Activated CD4-positive, alpha-beta memory T cell treated with anti-CD3 and anti-CD28 coated beads for 36 hours (primary cell): ENCODE measurements at regions of chr1 and their contacts with region 1.

Region 1: DNA sequence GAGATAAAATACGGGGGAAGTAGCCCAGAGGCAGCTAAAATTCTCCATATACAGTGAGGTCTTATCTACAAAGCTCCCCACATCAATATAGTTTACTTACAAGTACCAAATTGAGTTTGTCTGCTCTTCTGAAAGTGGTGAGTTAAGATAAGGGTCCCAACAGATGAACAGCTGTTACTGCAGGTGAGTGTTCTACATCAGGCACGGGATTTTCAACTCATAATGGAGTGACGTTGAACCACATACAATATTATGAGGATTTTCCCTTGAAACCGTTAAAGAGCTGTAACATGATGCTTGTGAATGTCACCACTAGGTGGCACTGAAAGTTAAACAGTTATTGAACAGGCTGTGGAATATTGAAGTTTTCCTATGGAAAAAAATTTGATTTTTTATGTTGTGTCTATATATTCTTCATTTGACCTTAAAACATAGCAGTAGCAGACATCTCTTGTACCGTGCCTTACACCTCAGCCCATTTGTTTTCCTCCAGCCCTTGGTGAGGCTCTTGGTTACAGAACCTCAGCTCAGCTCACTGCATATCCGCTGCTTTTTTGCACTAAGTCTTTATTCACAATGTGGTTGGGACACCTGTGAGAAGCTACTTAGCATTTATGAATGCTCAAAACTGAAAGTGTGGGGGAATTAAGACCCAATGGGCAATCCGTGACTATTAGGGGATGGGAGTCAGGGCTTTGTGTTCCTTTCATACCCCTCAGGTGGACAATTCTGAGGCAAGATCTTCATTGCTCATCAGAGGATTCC is 23.2 kb downstream of the CD1D start:
- DNase-seq: no peak
- H3K4me3 Mint-ChIP-seq: no peak overlapping the region
- H3K27ac Mint-ChIP-seq: no peak overlapping the region
- H3K4me1 Mint-ChIP-seq: peaks cover 7% of the 10 kb centered on the region
- H3K27me3 Mint-ChIP-seq: peaks cover 12% of the 10 kb centered on the region

Region 2: GRCh38 chr1:158329733-158330132 is 125.9 kb after region 1 on chr1:
- CTCF ChIA-PET with region 1: interaction called, 28 read pairs
- POLR2A ChIA-PET with region 1: no interaction called
- intact Hi-C with region 1: loop called (anchors 5 kb)
- DNase-seq: peak; percentile 20
- H3K4me3 Mint-ChIP-seq: no peak overlapping the region
- H3K27ac Mint-ChIP-seq: no peak overlapping the region
- H3K4me1 Mint-ChIP-seq: peaks cover 4% of the 10 kb centered on the region
- H3K27me3 Mint-ChIP-seq: peaks cover 6% of the 10 kb centered on the region

Region 3: GRCh38 chr1:158496374-158496773 is 292.5 kb after region 1 on chr1:
- CTCF ChIA-PET with region 1: interaction called, 6 read pairs
- POLR2A ChIA-PET with region 1: no interaction called
- intact Hi-C with region 1: loop called (anchors 1 kb)
- DNase-seq: no peak
- H3K4me3 Mint-ChIP-seq: no peak overlapping the region
- H3K27ac Mint-ChIP-seq: no peak overlapping the region
- H3K4me1 Mint-ChIP-seq: no peaks in the 10 kb centered on the region
- H3K27me3 Mint-ChIP-seq: peaks cover 12% of the 10 kb centered on the region

Region 4: GRCh38 chr1:158527190-158527815 is 323.4 kb after region 1 on chr1:
- CTCF ChIA-PET with region 1: interaction called, 33 read pairs
- POLR2A ChIA-PET with region 1: no interaction called
- intact Hi-C with region 1: loop called (anchors 1 kb)
- DNase-seq: no peak
- H3K4me3 Mint-ChIP-seq: no peak overlapping the region
- H3K27ac Mint-ChIP-seq: no peak overlapping the region
- H3K4me1 Mint-ChIP-seq: no peaks in the 10 kb centered on the region
- H3K27me3 Mint-ChIP-seq: peaks cover 12% of the 10 kb centered on the region